MCF 10A (cell line): ENCODE measurements at regions of chr9 and their contacts with region 1.

Region 1: DNA sequence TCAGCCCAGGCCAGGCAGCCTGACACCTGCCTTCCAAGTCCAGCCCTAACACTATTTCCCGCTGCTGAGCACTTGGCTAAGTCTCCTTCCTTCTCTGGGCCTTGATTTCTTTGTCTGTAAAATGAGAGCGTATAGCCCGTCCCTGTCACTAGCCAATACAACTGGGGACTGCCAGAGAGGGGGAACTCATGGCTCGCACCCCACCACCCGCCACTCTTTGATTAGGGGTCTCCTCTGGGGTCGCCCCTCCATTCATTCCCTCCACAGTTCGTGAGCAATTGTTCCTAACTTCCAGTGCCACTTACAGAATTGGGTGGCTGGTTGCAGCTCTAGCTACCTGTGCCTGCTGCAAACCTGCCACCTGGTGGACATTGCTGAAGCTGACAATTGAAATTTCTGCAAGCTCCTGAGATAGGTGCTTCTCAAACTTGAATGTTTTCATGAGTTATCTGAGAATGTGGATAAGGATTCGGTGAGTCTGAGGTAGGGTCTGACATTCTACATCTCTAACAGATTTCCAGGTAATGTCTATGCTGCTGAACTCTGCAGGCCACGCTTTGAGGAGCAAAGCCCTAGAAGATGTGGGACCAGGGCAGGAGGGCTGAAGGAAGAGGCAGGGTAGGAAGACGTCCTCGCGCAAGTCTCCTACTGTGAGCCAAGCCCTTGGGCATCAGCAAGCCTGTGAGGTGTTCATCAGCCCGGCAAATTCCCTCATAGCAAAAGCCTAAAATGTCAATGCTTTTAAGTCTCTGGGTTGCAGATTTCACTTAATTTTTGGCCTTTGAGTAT is 13.3 kb upstream of the RECK start:
- DNase-seq: peak; percentile 74
- H3K4me3 Mint-ChIP-seq: no peak overlapping the region
- H3K27ac Mint-ChIP-seq: no peak overlapping the region
- H3K4me1 Mint-ChIP-seq: peaks cover 6% of the 10 kb centered on the region
- H3K27me3 Mint-ChIP-seq: peaks cover 12% of the 10 kb centered on the region
- CTCF ChIP-seq: peak; percentile 84

Region 2: GRCh38 chr9:35945341-35946018 is 78.0 kb before region 1 on chr9:
- CTCF ChIA-PET with region 1: interaction called, 20 read pairs
- POLR2A ChIA-PET with region 1: interaction called, 4 read pairs
- intact Hi-C with region 1: no loop called
- DNase-seq: peak; percentile 89
- H3K4me3 Mint-ChIP-seq: peak overlapping the region; percentile 72
- H3K27ac Mint-ChIP-seq: peak overlapping the region; percentile 79
- H3K4me1 Mint-ChIP-seq: peaks cover 7% of the 10 kb centered on the region
- H3K27me3 Mint-ChIP-seq: no peaks in the 10 kb centered on the region
- CTCF ChIP-seq: peak; percentile 73